Activated B cell treated with CpG ODN at 0.5 μM for 24 hours (primary cell): ENCODE measurements at regions of chr4 and their contacts with region 1.

Region 1: DNA sequence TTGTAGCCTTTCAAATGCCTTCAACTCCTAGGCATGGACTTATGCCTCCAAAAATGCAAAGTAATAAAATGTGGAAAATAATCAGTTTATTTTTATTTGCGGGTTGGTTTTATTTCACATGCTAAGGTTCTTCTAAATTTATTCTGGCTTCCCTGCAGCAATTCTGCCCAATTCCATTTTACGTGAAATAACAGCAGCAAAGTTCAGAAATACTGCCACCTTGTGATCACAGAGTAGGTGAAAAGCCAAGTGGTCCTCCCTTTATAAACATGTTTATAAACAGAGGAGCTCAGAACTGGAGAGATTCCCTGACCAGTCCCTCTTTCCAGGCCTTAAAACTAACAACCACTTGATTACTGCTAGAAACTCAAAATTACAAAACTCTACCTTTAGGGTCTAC is 14.7 kb upstream of the DCHS2 start:
- DNase-seq: no peak
- ATAC-seq: no peak
- H3K4me3 Mint-ChIP-seq: no peak overlapping the region
- H3K27ac Mint-ChIP-seq: no peak overlapping the region
- H3K4me1 Mint-ChIP-seq: no peaks in the 10 kb centered on the region
- H3K27me3 Mint-ChIP-seq: peaks cover 30% of the 10 kb centered on the region
- CTCF ChIP-seq: no peak

Region 2: DNA sequence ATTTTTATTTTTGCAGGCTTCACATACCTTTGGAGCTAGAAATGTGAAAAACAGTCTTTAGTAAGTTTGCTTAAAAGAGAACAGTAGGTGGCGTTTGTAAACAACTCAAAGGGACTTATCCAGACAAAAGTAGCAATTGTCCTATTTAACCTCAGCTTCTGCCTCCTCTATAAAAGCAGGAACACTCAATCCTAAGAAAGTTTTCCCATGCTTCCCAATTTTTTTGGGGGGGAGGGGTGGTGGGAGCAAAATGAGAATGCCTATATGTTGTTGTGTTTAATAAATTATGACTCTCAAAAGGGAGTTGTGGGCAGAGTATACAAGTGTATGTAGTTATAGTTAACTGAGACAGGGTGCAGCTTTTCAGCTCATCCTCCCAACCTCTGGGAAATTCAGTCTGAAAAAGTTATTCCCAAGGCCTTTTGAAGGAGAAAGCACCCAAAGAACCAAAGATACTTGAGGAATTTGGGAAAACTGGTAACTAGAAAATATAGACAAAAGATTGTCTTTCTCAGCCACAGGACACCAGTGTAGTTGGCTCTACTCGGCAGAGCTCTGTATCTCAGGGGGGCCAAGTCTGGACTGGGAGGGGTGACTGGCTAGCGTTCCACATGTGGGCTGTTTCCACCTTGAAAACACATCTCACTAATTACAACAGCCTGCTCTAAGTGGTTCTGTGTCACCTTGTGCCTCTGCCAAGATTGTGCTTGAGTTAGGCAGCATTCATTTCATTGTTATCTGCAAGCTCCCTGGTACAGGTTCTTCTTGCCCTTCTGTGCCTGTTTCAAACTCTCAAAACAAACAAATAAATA is 720.1 kb before region 1 on chr4:
- CTCF ChIA-PET with region 1: no interaction called
- POLR2A ChIA-PET with region 1: no interaction called
- intact Hi-C with region 1: loop called (anchors 2 kb)
- DNase-seq: no peak
- ATAC-seq: no peak
- H3K4me3 Mint-ChIP-seq: no peak overlapping the region
- H3K27ac Mint-ChIP-seq: no peak overlapping the region
- H3K4me1 Mint-ChIP-seq: peaks cover 31% of the 10 kb centered on the region
- H3K27me3 Mint-ChIP-seq: peaks cover 64% of the 10 kb centered on the region
- CTCF ChIP-seq: no peak

Region 3: GRCh38 chr4:154292589-154292988 is 213.7 kb before region 1 on chr4:
- CTCF ChIA-PET with region 1: no interaction called
- POLR2A ChIA-PET with region 1: no interaction called
- intact Hi-C with region 1: loop called (anchors 1 kb)
- DNase-seq: no peak
- ATAC-seq: no peak
- H3K4me3 Mint-ChIP-seq: no peak overlapping the region
- H3K27ac Mint-ChIP-seq: no peak overlapping the region
- H3K4me1 Mint-ChIP-seq: no peaks in the 10 kb centered on the region
- H3K27me3 Mint-ChIP-seq: peaks cover 7% of the 10 kb centered on the region
- CTCF ChIP-seq: no peak

Region 4: GRCh38 chr4:154332681-154333421 is 173.4 kb before region 1 on chr4:
- CTCF ChIA-PET with region 1: interaction called, 43 read pairs
- POLR2A ChIA-PET with region 1: no interaction called
- intact Hi-C with region 1: loop called (anchors 1 kb)
- DNase-seq: peak; percentile 38
- ATAC-seq: peak; percentile 90
- H3K4me3 Mint-ChIP-seq: peak overlapping the region; percentile 85
- H3K27ac Mint-ChIP-seq: peak overlapping the region; percentile 64
- H3K4me1 Mint-ChIP-seq: peaks cover 11% of the 10 kb centered on the region
- H3K27me3 Mint-ChIP-seq: peaks cover 22% of the 10 kb centered on the region
- CTCF ChIP-seq: no peak

Region 5: DNA sequence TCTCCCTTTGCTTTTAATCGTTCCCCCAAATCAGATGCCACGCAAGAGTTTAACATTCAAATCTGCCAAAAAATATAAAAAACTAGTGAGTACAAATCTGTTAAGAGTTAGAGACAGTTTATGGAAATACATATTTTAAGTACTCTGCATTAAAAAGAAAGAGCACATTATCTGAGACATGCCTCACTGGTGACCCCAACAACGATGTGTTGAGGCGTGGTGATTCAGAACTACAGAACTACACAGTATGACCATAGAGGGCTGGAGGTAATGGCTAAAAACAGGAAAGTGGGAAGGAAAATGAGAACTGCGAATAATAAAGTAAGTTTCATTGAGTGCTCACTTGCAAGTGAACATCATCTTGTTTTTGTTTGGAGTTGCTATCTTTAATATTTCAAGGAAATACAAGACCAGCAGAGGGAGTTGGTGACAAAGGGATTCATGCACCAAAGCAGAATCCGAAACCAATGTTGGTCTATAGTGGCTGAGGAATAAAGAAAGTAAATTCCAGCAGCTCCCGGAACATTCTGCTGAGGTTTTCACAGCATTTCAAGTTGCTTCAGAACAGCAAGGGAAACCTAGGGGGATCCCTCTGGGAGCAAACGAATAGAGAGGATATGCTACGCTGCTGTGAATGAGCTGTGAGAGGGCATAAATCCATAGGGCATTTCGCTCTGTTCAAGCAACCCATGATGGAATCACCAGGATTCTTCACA is 106.8 kb before region 1 on chr4:
- CTCF ChIA-PET with region 1: interaction called, 4 read pairs
- POLR2A ChIA-PET with region 1: no interaction called
- intact Hi-C with region 1: loop called (anchors 1 kb)
- DNase-seq: no peak
- ATAC-seq: no peak
- H3K4me3 Mint-ChIP-seq: no peak overlapping the region
- H3K27ac Mint-ChIP-seq: no peak overlapping the region
- H3K4me1 Mint-ChIP-seq: peaks cover 15% of the 10 kb centered on the region
- H3K27me3 Mint-ChIP-seq: peaks cover 11% of the 10 kb centered on the region
- CTCF ChIP-seq: no peak